Activated CD4-positive, alpha-beta memory T cell treated with anti-CD3 and anti-CD28 coated beads, Interleukin-2, amount 10 ng/mL, durations not matched to agents 7 days and 5 days (primary cell): ENCODE measurements at regions of chr3 and their contacts with region 1.

Region 1: DNA sequence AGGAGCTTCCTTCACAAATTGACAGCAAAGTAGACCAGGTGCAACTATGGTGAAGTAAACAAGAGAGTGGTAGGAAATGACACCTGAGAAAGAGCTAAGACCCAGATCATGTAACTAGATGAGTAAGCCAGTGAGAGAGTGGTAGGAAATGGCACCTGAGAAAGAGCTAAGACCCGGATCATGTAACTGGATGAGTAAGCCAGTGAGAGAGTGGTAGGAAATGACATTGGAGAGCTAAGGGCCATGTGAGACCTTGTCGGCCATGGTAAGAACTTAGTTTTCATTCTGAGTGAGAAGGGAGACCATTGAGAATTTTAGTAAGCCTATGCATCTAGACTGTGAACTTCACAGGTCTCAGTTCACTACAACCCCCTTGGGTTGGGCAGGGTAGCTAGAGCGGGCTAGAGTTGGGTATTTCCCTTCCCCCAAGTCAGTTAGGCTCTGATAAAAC is 5.4 kb upstream of the SENP7 start:
- DNase-seq: peak; percentile 60
- H3K4me3 Mint-ChIP-seq: peak overlapping the region; percentile 28
- H3K27ac Mint-ChIP-seq: peak overlapping the region; percentile 81
- H3K4me1 Mint-ChIP-seq: peaks cover 52% of the 10 kb centered on the region
- H3K27me3 Mint-ChIP-seq: no peaks in the 10 kb centered on the region

Region 2: GRCh38 chr3:101529816-101530685 is 11.6 kb after region 1 on chr3:
- CTCF ChIA-PET with region 1: interaction called, 4 read pairs
- POLR2A ChIA-PET with region 1: interaction called, 15 read pairs
- DNase-seq: no peak
- H3K4me3 Mint-ChIP-seq: no peak overlapping the region
- H3K27ac Mint-ChIP-seq: no peak overlapping the region
- H3K4me1 Mint-ChIP-seq: peaks cover 30% of the 10 kb centered on the region
- H3K27me3 Mint-ChIP-seq: no peaks in the 10 kb centered on the region

Region 3: GRCh38 chr3:101544161-101544850 is 25.9 kb after region 1 on chr3:
- CTCF ChIA-PET with region 1: interaction called, 3 read pairs
- POLR2A ChIA-PET with region 1: interaction called, 26 read pairs
- DNase-seq: no peak
- H3K4me3 Mint-ChIP-seq: no peak overlapping the region
- H3K27ac Mint-ChIP-seq: no peak overlapping the region
- H3K4me1 Mint-ChIP-seq: peaks cover 32% of the 10 kb centered on the region
- H3K27me3 Mint-ChIP-seq: no peaks in the 10 kb centered on the region

Region 4: DNA sequence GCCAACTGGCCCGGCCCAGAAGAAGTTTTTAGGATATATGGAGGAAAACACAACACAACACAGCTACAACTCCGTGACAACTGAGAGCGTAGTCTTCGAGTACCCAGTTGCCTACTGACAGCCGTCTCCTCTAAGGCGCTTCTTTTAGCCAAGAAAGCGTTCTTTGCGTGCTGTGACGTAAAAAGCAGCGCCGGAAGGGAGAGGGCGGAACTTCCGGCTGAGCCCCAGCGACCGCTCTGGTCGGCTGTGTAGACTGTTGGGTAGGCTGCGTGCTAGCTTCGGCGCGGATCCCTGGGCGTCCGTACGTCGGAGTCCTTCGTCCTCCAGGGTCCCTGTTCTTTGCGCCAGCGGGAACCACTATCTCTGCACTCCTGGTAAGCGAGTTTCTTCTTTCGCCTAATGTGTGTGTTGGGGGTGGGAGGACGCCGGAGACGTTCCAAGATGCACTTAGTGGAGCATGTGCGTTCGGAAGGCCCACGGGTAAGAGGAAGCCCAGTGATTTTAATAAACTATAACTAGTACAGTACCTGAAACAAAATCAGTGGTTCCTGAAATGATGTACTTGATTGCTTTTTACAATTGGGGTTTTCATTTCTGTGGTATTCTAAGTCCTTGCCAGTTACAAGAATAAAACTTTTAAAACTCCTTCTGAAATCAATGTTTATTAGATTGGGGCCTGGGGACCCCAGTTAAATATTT is 43.3 kb after region 1 on chr3 and contains the start of gene TRMT10C:
- CTCF ChIA-PET with region 1: interaction called, 6 read pairs
- POLR2A ChIA-PET with region 1: interaction called, 35 read pairs
- DNase-seq: peak; percentile 95
- H3K4me3 Mint-ChIP-seq: peak within 1 kb of the TSS; percentile 98
- H3K27ac Mint-ChIP-seq: peak within 1 kb of the TSS; percentile 93
- H3K4me1 Mint-ChIP-seq: peaks cover 37% of the 10 kb centered on the region
- H3K27me3 Mint-ChIP-seq: peaks cover under 1% of the 10 kb centered on the region
- total RNA-seq, gene TRMT10C: 21.4 to 22.7 TPM